Activated T-helper 2 cell treated with anti-CD3 and anti-CD28 coated beads, Interferon-gamma antibody, Interleukin-2, Interleukin-4, amounts not matched to agents 10 μg/mL and 5 μg/mL and 100 μg/mL, durations not matched to agents 14 hours and 24 hours and 36 hours (primary cell): ENCODE measurements at regions of chr12 and their contacts with region 1.

Region 1: DNA sequence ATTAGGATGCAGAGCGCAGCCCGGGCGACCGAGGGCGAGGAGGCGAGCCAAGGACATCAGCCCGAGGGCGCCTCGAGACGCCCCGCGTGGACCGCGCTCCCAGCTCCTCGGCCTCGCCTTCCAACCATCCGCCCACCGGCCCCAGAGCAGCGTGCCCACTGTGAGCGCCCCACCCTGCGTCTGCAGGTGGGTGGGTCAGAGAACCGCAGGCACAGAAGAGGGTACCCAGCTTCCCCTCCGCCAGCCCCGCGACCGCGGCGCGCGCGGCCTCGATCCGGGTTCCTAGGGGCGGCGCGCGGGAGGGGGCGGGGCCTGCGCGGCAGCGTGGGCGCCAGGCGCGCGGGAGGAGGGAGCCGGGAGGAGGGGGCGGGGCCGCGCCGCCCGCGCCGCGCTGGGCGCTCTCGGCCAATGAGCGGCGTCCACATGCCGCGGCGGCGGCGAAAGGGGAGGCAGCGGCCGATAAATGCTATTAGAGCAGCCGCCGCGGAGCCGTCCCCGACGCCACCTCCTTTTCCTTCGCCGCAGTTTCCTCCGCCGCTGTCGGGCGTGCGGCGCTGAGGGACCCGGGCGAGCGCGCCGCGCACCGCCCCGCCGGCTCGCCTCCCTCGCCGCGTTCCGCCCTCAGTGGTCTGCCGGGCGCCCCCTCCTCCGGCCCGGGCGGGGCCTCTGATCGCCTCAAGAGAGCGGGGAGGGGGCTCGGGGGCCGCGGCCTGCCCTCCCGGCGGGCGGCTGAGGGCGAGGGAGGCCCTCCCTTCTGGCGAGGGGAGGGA is at the start of gene ATP2A2:
- DNase-seq: peak; percentile 89
- H3K4me3 Mint-ChIP-seq: peak within 1 kb of the TSS; percentile 95
- H3K27ac Mint-ChIP-seq: peak within 1 kb of the TSS; percentile 90
- H3K4me1 Mint-ChIP-seq: peaks cover 42% of the 10 kb centered on the region
- H3K27me3 Mint-ChIP-seq: peaks cover 10% of the 10 kb centered on the region
- total RNA-seq, gene ATP2A2: 213 and 219 TPM in 2 replicates

Region 2: DNA sequence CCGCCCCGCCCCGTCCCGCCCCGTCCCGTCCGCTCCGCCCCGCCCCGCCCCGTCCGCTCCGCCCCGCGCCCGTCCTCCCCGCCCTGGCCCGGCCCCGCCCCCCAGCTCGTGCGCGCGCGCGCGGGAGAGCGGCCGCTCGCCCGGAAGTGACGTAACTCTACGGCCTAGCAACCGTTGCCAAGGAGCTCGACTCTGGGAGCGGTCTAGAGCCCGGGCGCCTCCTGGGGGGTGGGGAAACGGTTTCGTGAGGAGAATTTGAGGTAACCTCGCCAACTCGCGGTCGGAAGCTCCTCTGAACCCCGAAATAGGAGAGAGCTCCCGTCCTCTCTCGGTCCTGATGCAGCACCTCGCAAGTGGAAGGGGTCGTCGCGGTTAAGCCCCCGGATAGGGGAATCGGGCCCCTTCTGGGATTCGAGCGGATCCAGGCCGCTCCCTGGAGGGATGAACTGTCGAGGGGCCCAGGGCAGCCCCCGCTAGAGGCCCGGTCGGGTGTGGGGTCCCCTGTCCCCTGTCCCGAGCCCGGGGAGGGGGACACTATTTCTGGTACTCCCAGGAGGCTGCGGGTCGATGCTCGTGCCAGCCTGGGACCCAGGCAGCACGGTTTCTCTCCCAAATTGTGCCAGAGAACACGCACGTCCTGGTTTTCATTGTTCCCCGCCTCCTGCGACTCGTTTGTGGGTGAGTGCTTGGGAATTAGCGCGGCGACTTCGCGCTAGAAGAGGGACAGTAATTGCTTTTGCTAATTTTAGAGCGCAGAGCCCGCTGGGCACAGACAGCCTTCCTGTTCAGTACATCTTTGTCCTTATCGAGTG is 156.6 kb before region 1 on chr12 and contains the start of gene IFT81:
- intact Hi-C with region 1: loop called (anchors 1 kb)
- DNase-seq: peak; percentile 91
- H3K4me3 Mint-ChIP-seq: peak within 1 kb of the TSS; percentile 89
- H3K27ac Mint-ChIP-seq: peak within 1 kb of the TSS; percentile 42
- H3K4me1 Mint-ChIP-seq: peaks cover 10% of the 10 kb centered on the region
- H3K27me3 Mint-ChIP-seq: peaks cover 21% of the 10 kb centered on the region
- total RNA-seq, gene IFT81: 1.3 and 1.6 TPM in 2 replicates

Region 3: DNA sequence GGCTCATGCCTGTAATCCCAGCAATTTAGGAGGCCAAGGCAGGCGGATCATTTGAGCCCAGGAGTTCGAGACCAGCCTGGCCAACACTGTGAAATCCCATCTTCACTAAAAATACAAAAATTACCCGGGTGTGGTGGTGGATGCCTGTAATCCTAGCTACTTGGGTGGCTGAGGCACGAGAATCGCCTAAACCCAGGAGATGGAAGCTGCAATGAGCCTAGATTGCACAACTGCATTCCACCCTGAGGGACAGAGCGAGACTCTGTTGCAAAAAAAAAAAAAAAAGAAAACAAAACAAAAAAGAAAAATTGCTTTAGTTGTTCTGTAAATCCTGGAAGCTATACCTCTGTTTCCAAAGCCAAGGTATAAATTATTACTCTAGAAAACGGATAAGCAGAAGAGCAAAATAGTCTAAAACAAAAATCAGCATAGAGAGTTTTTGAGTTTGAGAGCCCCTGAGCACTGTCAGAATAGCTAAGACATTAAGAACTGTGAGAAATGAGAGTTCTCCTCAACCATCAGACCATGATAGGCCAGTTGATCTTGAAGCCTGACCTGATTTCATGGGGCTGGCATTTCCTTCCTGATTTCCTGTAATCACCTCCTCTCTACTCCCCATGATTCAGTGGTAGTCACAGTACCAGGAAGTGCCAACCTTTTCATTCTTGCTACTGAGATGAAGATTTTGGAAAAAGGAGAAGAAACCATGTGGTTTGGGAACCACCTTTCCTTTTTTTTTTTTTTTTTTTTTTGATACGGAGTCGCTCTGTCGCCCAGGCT is 31.8 kb after region 1 on chr12:
- intact Hi-C with region 1: loop called (anchors 2 kb)
- DNase-seq: no peak
- H3K4me3 Mint-ChIP-seq: no peak overlapping the region
- H3K27ac Mint-ChIP-seq: peak overlapping the region; percentile 49
- H3K4me1 Mint-ChIP-seq: peaks cover 50% of the 10 kb centered on the region
- H3K27me3 Mint-ChIP-seq: no peaks in the 10 kb centered on the region

Region 4: DNA sequence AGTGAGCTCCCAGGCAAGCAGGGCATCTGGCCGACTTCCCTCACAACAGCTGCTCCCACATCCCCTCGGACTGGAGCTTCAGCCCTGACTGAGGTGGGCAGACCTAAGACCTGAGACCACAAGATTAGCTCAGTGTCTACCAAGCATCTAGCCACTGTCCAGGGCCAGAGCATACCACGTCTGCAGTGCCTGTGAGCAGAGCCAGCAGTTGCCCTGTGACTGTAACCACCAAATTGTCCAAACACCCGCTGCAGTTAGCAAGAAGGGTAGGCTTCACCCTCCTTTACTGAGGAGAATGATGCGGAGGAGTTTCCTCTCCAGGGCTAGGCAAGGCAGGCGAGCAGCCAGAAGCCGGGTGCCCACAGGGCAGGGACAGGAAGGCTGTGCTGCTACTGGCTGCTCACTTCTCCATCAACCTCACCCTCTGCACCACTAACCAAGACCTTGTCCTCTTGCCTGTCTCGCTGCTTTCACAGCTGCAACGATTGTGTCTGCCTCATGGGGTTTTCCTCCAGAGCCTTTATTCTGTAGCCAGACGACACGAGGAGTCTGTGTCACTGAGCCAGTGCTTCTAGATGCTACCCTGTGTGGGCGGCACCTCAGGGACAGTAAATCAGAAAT is 68.7 kb after region 1 on chr12:
- intact Hi-C with region 1: loop called (anchors 5 kb)
- DNase-seq: peak; percentile 45
- H3K4me3 Mint-ChIP-seq: peak overlapping the region; percentile 45
- H3K27ac Mint-ChIP-seq: peak overlapping the region; percentile 90
- H3K4me1 Mint-ChIP-seq: peaks cover 50% of the 10 kb centered on the region
- H3K27me3 Mint-ChIP-seq: no peaks in the 10 kb centered on the region

Region 5: DNA sequence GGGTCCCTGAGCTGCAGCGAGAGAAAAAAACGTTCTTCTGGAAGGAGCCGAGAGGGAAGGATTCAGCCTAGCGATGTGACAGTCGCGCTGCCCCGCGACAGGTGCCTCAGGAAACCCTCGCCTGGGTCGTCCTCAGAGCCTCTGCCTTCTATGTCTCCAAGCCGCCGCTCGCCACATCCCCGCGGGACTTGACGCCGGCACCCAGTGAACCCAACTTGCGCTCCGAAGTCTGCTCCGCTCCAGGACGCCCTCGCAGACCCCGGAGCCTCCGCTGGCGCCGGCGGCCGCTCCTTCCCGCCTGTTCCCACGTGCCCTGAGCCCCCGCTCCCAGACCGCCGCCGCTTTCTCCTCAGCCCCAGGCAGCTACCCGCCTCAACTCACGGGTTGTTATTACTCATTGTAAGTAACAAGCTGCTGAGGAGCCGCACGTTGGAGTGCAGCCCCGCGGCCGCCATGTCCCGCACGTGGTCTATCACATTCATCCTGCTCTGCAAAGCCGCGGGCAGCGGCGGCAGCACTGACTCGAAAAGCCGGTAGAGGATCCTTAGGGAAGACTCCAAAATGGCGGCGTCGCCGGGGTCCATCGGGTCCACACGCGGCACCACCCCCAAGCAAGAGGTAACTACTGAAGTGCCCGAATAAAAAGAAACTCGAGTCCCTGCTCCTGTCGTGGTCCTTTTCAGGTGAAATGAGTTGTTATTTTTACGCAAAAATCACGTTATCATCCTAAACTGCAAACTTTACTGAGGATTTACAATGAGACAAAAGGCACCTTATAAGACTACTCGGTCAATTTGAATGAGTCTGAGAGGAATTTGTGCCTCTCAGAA is 122.4 kb after region 1 on chr12 and contains the start of gene ANAPC7:
- intact Hi-C with region 1: loop called (anchors 1 kb)
- DNase-seq: peak; percentile 81
- H3K4me3 Mint-ChIP-seq: peak within 1 kb of the TSS; percentile 99
- H3K27ac Mint-ChIP-seq: peak within 1 kb of the TSS; percentile 98
- H3K4me1 Mint-ChIP-seq: peaks cover 16% of the 10 kb centered on the region
- H3K27me3 Mint-ChIP-seq: no peaks in the 10 kb centered on the region
- total RNA-seq, gene ANAPC7: 67.2 and 68.4 TPM in 2 replicates

Region 6: DNA sequence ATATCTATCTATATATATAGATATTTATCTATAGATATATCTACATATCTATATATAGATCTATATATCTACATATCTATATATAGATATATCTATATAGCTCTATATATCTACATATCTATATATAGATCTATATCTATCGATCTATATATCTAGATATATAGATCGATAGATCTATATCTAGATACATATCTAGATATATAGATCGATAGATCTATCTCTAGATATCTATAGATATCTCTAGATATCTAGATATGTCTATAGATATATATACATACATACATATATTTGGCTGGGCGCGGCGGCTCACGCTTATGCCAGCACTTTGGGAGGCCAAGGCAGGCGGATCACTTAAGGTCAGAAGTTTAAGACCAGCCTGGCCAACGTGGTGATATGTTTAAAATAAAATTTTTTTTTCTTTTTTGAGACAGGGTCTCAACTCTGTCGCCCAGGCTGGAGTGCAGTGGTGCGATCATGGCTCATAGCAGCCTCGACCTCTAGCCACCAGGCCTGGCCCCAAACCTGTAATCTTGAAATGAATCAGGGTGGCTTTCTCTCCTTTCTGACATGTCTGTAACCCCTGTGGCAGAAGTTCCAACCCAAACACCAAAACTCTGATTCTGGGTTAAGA is 151.1 kb after region 1 on chr12:
- intact Hi-C with region 1: loop called (anchors 1 kb)
- DNase-seq: no peak
- H3K4me3 Mint-ChIP-seq: no peak overlapping the region
- H3K27ac Mint-ChIP-seq: no peak overlapping the region
- H3K4me1 Mint-ChIP-seq: peaks cover 1% of the 10 kb centered on the region
- H3K27me3 Mint-ChIP-seq: no peaks in the 10 kb centered on the region

Region 7: GRCh38 chr12:110583137-110584059 is 302.4 kb after region 1 on chr12 and contains the start of gene PPTC7:
- intact Hi-C with region 1: loop called (anchors 5 kb)
- DNase-seq: peak; percentile 91
- H3K4me3 Mint-ChIP-seq: peak within 1 kb of the TSS; percentile 98
- H3K27ac Mint-ChIP-seq: peak within 1 kb of the TSS; percentile 96
- H3K4me1 Mint-ChIP-seq: peaks cover 61% of the 10 kb centered on the region
- H3K27me3 Mint-ChIP-seq: no peaks in the 10 kb centered on the region
- total RNA-seq, gene PPTC7: 41.7 and 42.4 TPM in 2 replicates